Activated CD4-positive, alpha-beta T cell treated with anti-CD3 and anti-CD28 coated beads for 36 hours (primary cell): ENCODE measurements at regions of chr10 and their contacts with region 1.

Region 1: GRCh38 chr10:102394079-102394800 is 1.3 kb upstream of the NFKB2 start:
- DNase-seq: peak; percentile 99
- ATAC-seq: peak; percentile 87
- H3K4me3 Mint-ChIP-seq: peak overlapping the region; percentile 95
- H3K27ac Mint-ChIP-seq: peak overlapping the region; percentile 99
- H3K4me1 Mint-ChIP-seq: peaks cover 41% of the 10 kb centered on the region
- H3K27me3 Mint-ChIP-seq: no peaks in the 10 kb centered on the region

Region 2: DNA sequence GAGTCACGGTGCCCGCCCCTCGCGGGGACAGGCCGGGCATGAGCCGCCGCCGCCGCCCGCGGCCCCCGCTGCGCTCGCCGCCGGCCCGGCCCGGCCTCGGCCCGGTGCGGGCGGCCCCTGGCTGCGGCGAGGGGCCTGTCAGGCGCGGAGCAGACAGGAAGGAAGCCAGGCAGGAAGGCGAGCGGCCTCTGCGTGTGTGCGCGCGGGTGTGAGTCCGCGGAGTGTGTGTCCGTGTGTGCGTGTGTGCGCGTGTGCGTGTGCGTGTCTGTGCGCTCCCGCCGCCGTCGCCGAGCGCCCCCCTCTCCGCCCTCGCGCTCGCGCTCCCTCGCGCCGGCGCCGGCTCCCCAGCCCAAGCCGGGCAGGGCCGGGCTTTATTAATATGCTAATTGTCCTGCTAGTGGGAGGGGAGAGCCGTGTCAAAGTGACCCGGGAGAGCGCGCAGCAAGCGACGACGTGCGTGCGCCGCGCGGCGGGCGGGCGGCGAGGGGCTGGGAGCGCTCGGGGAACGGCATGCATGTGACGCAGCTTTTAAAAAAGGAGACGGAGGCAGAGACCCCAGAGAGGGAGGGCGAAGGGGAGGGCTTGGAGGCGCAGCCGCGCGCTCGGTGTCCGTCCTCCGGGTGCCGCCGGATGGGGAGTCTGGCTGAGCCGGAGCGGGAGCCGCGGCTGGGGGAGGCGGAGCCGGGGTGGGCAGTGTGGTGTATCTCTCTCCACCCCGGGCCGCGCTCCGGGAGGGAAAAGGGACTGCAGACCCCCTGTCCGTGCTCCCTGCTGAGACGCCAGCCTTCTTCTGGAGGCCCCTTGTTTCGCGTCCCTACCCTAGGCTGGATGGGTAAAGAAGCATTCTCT is 273.9 kb before region 1 on chr10 and contains the start of gene LDB1:
- CTCF ChIA-PET with region 1: no interaction called
- POLR2A ChIA-PET with region 1: no interaction called
- intact Hi-C with region 1: loop called (anchors 1 to 2 kb)
- DNase-seq: peak; percentile 77
- ATAC-seq: peak; percentile 28
- H3K4me3 Mint-ChIP-seq: peak within 1 kb of the TSS; percentile 81
- H3K27ac Mint-ChIP-seq: peak within 1 kb of the TSS; percentile 97
- H3K4me1 Mint-ChIP-seq: peaks cover 51% of the 10 kb centered on the region
- H3K27me3 Mint-ChIP-seq: no peaks in the 10 kb centered on the region
- total RNA-seq, gene LDB1: 69.6 to 86.7 TPM

Region 3: DNA sequence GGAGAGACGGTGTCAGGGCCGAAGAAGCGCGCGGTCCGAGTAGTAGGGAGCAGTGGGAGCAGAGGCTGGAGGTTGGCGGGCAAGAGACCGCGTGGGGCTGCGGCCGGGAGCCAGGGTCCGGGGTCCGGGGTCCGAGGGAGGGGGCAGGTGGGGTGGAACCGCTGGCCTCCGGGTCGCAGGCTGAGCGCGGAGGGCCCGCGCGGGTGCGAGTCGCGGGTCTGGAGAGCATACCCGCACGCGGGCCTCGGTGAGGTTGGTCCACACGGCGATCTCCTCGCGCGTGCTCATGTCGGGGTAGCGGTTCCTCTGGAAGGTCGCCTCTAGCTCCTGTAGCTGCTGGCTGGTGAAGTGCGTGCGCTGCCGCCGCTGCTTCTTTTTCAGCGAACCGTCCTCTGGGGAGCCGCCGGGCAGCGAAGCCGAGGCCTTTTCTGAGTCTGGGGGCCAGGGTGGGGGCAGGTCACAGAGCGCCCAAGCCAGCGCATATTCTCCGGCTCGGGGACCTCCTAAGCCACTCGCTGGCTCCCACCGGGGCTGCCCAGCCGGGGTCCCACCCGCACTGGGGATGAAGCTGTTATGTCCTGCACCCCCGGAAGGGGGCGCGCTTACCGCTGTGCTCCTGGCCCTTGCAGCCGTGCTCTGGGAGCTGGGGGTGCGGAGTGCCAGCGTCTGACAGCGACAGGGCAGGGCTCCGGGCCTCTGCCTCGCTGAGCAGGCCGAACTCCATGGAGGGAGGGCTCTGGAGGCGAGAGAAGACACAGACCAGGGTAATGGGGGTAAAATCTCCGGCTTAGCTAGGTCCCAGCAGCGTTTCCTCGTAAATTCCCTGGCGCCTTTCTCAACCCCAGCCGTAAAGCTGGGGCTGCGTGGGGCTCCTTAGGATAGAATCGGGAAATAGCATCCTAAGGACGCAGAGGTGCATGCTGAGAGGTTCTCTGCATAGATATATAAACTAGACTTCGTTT is 162.6 kb before region 1 on chr10:
- CTCF ChIA-PET with region 1: interaction called, 39 read pairs
- POLR2A ChIA-PET with region 1: interaction called, 3 read pairs
- intact Hi-C with region 1: loop called (anchors 1 to 2 kb)
- DNase-seq: peak; percentile 89
- ATAC-seq: peak; percentile 78
- H3K4me3 Mint-ChIP-seq: peak overlapping the region; percentile 63
- H3K27ac Mint-ChIP-seq: no peak overlapping the region
- H3K4me1 Mint-ChIP-seq: peaks cover 17% of the 10 kb centered on the region
- H3K27me3 Mint-ChIP-seq: peaks cover 43% of the 10 kb centered on the region

Region 4: GRCh38 chr10:102408728-102409603 is 14.7 kb after region 1 on chr10:
- CTCF ChIA-PET with region 1: interaction called, 30 read pairs
- POLR2A ChIA-PET with region 1: interaction called, 11 read pairs
- intact Hi-C with region 1: loop called (anchors 1 to 2 kb)
- DNase-seq: peak; percentile 91
- ATAC-seq: peak; percentile 69
- H3K4me3 Mint-ChIP-seq: peak overlapping the region; percentile 71
- H3K27ac Mint-ChIP-seq: peak overlapping the region; percentile 73
- H3K4me1 Mint-ChIP-seq: peaks cover 35% of the 10 kb centered on the region
- H3K27me3 Mint-ChIP-seq: peaks cover 14% of the 10 kb centered on the region

Region 5: DNA sequence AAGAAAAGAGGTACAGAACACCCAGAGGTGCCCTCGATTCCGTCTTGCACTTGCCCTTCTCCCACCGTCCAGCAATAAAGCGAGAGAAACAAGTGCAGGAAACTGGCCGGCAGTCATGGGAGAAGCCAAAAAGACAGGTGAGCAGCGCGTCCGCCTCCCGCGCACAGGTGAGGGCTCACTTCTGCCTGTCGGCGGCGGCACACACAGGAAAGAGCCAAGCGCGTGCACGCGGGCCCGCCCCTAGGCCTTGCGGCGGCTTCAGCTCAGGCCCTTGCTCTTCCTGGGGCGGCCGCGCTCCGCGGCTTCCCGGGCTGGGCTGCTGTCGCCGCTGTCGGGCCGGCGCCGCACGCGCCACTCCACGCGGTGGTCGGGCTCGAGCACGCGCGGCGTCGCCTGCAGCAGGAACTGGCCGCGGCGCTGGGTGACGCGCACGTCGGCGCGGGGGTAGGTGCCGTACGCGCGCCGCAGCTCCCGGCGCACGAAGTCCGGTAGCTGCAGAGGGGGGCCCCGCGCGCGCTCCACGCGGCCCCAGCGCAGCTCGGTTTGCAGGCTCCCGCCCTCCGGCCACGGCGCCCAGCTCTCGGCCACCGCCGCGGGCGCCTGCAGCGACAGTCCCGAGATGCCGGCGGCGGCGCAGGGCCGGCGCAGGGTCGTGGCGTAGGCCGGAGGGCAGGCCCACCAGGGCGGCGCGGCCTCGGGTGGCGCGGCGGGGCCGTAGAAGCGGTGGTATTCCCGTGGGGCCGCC is 56.1 kb after region 1 on chr10:
- CTCF ChIA-PET with region 1: interaction called, 21 read pairs
- POLR2A ChIA-PET with region 1: interaction called, 3 read pairs
- intact Hi-C with region 1: loop called (anchors 1 kb)
- DNase-seq: peak; percentile 91
- ATAC-seq: peak; percentile 66
- H3K4me3 Mint-ChIP-seq: peak overlapping the region; percentile 95
- H3K27ac Mint-ChIP-seq: peak overlapping the region; percentile 93
- H3K4me1 Mint-ChIP-seq: peaks cover 25% of the 10 kb centered on the region
- H3K27me3 Mint-ChIP-seq: no peaks in the 10 kb centered on the region

Region 6: DNA sequence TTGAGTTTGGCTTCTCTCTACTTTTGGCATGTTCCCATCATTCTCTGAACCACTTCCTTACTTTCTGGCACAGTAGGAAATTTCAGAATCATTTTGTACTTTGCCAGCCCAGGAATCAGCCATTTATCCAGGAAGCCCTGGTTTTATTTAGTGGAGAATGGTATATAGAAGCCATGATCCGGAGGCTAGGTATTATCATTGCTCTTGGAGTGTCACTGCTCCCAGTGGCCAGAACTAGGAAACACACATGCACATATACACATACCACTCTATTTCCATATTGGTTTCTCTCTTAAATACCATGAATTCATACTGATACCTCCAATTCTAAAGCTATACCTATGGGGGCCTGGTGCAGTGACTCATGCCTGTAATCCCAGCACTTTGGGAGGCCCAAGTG is 145.8 kb after region 1 on chr10:
- CTCF ChIA-PET with region 1: no interaction called
- POLR2A ChIA-PET with region 1: no interaction called
- intact Hi-C with region 1: no loop called
- DNase-seq: peak; percentile 35
- ATAC-seq: peak; percentile 96
- H3K4me3 Mint-ChIP-seq: no peak overlapping the region
- H3K27ac Mint-ChIP-seq: no peak overlapping the region
- H3K4me1 Mint-ChIP-seq: peaks cover 18% of the 10 kb centered on the region
- H3K27me3 Mint-ChIP-seq: no peaks in the 10 kb centered on the region

Region 7: DNA sequence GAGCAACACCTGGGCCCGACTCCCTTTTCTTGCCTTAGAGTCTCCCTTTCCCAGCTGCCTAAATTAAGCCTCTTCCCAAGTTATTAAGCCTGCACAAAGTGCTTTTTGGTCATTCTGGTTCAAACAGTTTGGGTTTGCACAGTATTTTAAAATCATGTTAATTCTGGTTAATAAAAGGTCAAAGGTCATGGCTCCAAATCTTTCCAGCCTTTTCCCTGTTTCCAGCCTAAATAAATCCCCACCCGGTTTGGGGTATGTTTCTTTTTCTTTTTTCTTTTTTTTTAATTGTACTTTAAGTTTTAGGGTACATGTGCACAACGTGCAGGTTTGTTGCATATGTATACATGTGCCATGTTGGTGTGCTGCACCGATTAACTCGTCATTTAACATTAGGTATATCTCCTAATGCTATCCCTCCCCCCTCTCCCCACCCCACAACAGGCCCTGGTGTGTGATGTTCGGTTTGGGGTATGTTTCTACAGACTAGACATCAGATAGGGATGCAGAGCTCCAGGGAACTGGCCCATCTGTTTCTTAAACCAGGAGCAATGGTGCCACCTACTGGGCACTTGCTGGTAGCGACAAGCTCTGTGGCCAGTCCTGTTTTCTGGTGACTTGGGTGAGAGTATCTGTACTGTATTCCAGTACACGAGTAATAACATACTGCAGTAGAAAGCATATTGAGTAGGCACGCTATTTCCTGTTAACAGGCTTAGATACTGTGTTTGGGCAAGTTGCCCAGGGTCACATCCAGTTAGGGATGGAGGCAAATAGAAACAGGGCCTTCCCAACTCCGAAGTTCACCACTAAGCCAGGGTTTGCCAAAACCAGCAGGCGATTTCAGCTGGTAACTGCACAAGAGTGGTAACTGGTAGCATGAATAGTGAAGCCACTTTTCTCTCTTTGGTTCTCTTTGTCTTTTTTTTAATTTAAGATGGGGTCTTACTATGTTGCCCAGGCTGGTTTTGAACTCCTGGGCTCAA is 189.5 kb after region 1 on chr10:
- CTCF ChIA-PET with region 1: interaction called, 4 read pairs
- POLR2A ChIA-PET with region 1: no interaction called
- intact Hi-C with region 1: loop called (anchors 2 to 5 kb)
- DNase-seq: peak; percentile 91
- ATAC-seq: peak; percentile 100
- H3K4me3 Mint-ChIP-seq: no peak overlapping the region
- H3K27ac Mint-ChIP-seq: no peak overlapping the region
- H3K4me1 Mint-ChIP-seq: peaks cover 9% of the 10 kb centered on the region
- H3K27me3 Mint-ChIP-seq: no peaks in the 10 kb centered on the region